Activated naive CD4-positive, alpha-beta T cell treated with anti-CD3 and anti-CD28 coated beads for 36 hours (primary cell): ENCODE measurements at regions of chr5 and their contacts with region 1.

Region 1: GRCh38 chr5:35926389-35927051 is 11.9 kb downstream of the CAPSL start:
- DNase-seq: peak; percentile 83
- H3K4me3 Mint-ChIP-seq: peak overlapping the region; percentile 16
- H3K27ac Mint-ChIP-seq: no peak overlapping the region
- H3K4me1 Mint-ChIP-seq: peaks cover 46% of the 10 kb centered on the region
- H3K27me3 Mint-ChIP-seq: peaks cover 1% of the 10 kb centered on the region

Region 2: DNA sequence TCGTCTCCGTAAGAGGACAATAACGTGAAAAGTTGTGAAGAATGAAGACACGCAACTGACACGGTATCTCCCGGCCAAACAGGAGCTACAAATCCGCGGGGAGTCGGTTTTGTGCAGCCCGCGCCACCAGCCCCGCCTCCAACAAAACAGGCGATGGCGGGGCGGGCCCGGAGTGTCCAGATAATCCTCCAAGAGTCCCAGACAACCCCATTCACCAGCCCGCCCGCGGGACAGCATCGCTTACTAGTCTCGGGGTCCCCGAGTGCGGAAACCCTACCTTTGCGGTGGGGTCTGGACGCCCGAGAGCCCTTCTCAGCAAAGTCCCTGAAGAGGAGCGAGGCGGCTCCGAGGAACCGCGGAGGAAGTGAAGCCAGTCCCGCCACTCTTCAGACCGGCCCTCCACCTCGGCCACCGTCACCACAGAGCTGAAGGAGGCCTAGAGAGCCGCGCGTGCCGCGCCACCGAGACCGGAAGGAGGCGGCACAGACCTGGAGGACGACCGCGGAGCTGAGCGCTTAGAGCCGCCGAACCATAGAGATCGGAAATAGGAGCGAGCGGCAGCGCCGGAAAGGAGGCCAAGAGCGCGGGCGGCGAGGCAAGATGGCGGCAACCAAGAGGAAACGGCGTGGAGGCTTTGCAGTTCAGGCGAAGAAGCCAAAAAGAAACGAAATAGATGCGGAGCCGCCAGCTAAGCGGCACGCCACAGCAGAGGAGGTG is 1011.2 kb before region 1 on chr5 and contains the starts of genes BRIX1 and RAD1:
- CTCF ChIA-PET with region 1: no interaction called
- intact Hi-C with region 1: loop called (anchors 2 kb)
- DNase-seq: peak; percentile 97
- H3K4me3 Mint-ChIP-seq: no peak within 1 kb of the TSS
- H3K27ac Mint-ChIP-seq: peak within 1 kb of the TSS; percentile 52
- H3K4me1 Mint-ChIP-seq: peaks cover 32% of the 10 kb centered on the region
- H3K27me3 Mint-ChIP-seq: no peaks in the 10 kb centered on the region
- total RNA-seq, gene BRIX1: 66.5 to 69.0 TPM
- total RNA-seq, gene RAD1: 38.8 to 40.7 TPM

Region 3: GRCh38 chr5:35230038-35230631 is 696.4 kb before region 1 on chr5 and contains the start of gene PRLR:
- CTCF ChIA-PET with region 1: interaction called, 3 read pairs
- intact Hi-C with region 1: loop called (anchors 2 kb)
- DNase-seq: peak; percentile 6
- H3K4me3 Mint-ChIP-seq: peak within 1 kb of the TSS; percentile 58
- H3K27ac Mint-ChIP-seq: no peak within 1 kb of the TSS
- H3K4me1 Mint-ChIP-seq: peaks cover 6% of the 10 kb centered on the region
- H3K27me3 Mint-ChIP-seq: peaks cover 56% of the 10 kb centered on the region
- total RNA-seq, gene PRLR: not detected

Region 4: DNA sequence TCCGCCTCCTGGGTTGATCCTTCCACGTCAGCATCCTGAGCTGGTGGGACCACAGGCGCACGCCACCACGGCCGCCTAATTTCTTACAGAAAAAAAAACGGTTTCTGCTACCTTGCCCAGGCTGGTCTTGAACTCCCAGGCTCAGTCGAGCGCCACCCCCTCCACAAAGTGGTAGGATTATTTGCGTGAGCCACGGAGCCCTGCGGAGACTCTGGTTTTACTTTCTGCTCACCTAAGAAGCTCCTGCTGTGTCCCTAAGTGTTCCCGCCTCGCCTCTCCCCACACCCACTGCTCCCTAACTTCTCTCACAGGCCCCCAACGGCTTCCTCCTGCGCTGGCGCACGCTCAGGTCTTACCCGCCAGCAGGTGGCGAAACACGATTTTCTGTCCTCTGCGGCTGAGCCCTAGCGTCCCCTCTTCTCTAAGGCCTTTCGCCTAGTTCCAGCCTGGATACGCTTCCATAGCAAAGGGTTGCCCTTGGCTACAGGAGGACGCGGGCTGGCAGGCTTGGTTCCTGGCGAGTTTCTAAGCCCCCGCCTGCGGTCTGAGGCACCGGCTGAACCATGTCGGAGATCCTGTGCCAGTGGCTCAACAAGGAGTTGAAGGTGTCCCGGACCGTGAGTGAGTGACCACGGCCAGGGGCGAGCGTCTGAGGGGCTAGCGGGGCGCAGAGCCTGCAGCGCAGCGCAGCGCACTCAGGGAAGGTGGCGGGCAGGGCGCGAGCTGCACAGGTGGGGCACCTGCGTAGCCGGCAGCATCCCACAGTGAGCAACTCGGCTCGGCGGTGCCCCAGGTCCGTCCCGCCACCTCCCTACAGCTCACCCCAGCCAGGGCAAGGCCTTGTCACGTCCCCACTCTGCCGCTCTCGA is 308.9 kb before region 1 on chr5 and contains the start of gene SPEF2:
- CTCF ChIA-PET with region 1: interaction called, 50 read pairs
- intact Hi-C with region 1: loop called (anchors 1 kb)
- DNase-seq: peak; percentile 86
- H3K4me3 Mint-ChIP-seq: peak within 1 kb of the TSS; percentile 90
- H3K27ac Mint-ChIP-seq: peak within 1 kb of the TSS; percentile 88
- H3K4me1 Mint-ChIP-seq: peaks cover 16% of the 10 kb centered on the region
- H3K27me3 Mint-ChIP-seq: no peaks in the 10 kb centered on the region
- total RNA-seq, gene SPEF2: 6.5 to 6.6 TPM

Region 5: GRCh38 chr5:35672995-35673394 is 253.5 kb before region 1 on chr5:
- CTCF ChIA-PET with region 1: interaction called, 8 read pairs
- intact Hi-C with region 1: loop called (anchors 1 kb)
- DNase-seq: peak; percentile 73
- H3K4me3 Mint-ChIP-seq: no peak overlapping the region
- H3K27ac Mint-ChIP-seq: peak overlapping the region; percentile 75
- H3K4me1 Mint-ChIP-seq: peaks cover 63% of the 10 kb centered on the region
- H3K27me3 Mint-ChIP-seq: no peaks in the 10 kb centered on the region

Region 6: GRCh38 chr5:35832762-35833161 is 93.8 kb before region 1 on chr5:
- CTCF ChIA-PET with region 1: interaction called, 5 read pairs
- intact Hi-C with region 1: loop called (anchors 1 kb)
- DNase-seq: no peak
- H3K4me3 Mint-ChIP-seq: no peak overlapping the region
- H3K27ac Mint-ChIP-seq: peak overlapping the region; percentile 95
- H3K4me1 Mint-ChIP-seq: peaks cover 94% of the 10 kb centered on the region
- H3K27me3 Mint-ChIP-seq: no peaks in the 10 kb centered on the region

Region 7: GRCh38 chr5:35884115-35884788 is 42.3 kb before region 1 on chr5:
- CTCF ChIA-PET with region 1: interaction called, 8 read pairs
- intact Hi-C with region 1: loop called (anchors 1 kb)
- DNase-seq: peak; percentile 60
- H3K4me3 Mint-ChIP-seq: peak overlapping the region; percentile 25
- H3K27ac Mint-ChIP-seq: peak overlapping the region; percentile 93
- H3K4me1 Mint-ChIP-seq: peaks cover 49% of the 10 kb centered on the region
- H3K27me3 Mint-ChIP-seq: no peaks in the 10 kb centered on the region

Region 8: GRCh38 chr5:35963381-35963843 is 36.9 kb after region 1 on chr5:
- CTCF ChIA-PET with region 1: no interaction called
- intact Hi-C with region 1: no loop called
- DNase-seq: peak; percentile 35
- H3K4me3 Mint-ChIP-seq: no peak overlapping the region
- H3K27ac Mint-ChIP-seq: no peak overlapping the region
- H3K4me1 Mint-ChIP-seq: no peaks in the 10 kb centered on the region
- H3K27me3 Mint-ChIP-seq: peaks cover 15% of the 10 kb centered on the region

Region 9: DNA sequence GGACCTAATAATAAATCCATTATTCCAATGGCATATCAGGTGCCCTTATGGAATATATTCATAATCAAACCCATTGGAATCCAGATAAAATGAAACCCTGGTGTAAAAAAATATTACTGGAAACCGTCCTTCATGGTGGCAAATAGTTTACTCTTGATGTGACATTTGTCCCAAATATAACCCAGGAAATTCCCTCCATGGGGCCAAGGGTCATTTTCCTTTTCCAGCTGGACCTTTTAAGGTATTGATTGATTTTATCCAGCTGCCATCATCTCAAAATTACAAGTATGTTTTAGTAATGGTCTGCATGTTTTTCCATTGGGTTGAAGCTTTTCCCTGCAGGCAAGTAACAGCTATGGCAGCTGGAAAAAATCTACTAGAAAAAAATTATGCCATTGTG is 73.0 kb after region 1 on chr5:
- CTCF ChIA-PET with region 1: no interaction called
- intact Hi-C with region 1: no loop called
- DNase-seq: no peak
- H3K4me3 Mint-ChIP-seq: no peak overlapping the region
- H3K27ac Mint-ChIP-seq: no peak overlapping the region
- H3K4me1 Mint-ChIP-seq: no peaks in the 10 kb centered on the region
- H3K27me3 Mint-ChIP-seq: peaks cover 9% of the 10 kb centered on the region

Region 10: DNA sequence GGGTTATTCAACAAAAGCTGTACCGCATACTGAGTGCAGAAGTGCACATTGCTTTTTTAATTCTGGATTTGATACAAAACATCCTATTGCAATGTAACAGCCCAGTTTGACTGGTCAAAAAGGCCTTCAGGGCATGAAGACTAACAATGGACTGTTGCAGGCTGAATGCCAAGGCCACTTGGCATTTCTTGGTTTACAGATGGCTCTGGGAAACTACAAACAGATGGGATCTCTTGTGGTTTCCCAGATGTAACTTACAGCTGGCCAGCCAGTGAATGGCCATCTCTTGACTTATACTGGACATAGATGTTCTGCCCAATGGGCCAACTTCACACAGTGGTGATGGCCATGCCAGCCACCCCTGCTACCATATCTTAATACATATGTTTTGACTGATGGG is 103.4 kb after region 1 on chr5:
- CTCF ChIA-PET with region 1: no interaction called
- intact Hi-C with region 1: no loop called
- DNase-seq: no peak
- H3K4me3 Mint-ChIP-seq: no peak overlapping the region
- H3K27ac Mint-ChIP-seq: no peak overlapping the region
- H3K4me1 Mint-ChIP-seq: no peaks in the 10 kb centered on the region
- H3K27me3 Mint-ChIP-seq: peaks cover 5% of the 10 kb centered on the region

Region 11: DNA sequence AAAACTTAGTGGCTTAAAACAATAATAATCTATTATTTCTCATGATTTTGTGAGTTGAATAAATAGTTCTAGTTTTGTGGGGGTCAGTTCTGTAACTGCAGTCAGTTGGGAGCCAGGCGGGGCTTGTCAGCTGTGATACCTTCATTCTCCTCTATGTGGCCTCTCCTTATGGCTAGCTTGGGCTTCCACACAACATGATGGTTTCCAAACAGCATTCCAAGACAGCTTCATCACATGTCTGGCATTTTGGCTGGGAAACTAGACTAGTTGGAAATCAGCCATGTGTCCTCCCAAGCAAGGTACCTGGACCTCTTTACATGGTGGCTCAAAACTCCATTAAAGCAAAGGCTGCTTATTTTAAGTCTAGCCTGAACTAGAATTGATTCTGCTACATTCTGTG is 436.6 kb after region 1 on chr5:
- CTCF ChIA-PET with region 1: no interaction called
- intact Hi-C with region 1: no loop called
- DNase-seq: no peak
- H3K4me3 Mint-ChIP-seq: no peak overlapping the region
- H3K27ac Mint-ChIP-seq: no peak overlapping the region
- H3K4me1 Mint-ChIP-seq: no peaks in the 10 kb centered on the region
- H3K27me3 Mint-ChIP-seq: no peaks in the 10 kb centered on the region